Transverse colon (tissue), 4 donors: ENCODE measurements at regions of chr6 and their contacts with region 1.

Region 1: GRCh38 chr6:83884523-83884922 is 25.0 kb downstream of the CYB5R4 start:
- DNase-seq: no peak
- H3K4me3 ChIP-seq: no peak overlapping the region
- H3K27ac ChIP-seq: no peak overlapping the region
- H3K4me1 ChIP-seq: no peaks in the 10 kb centered on the region
- H3K27me3 ChIP-seq: no peaks in the 10 kb centered on the region
- CTCF ChIP-seq: peak; percentile 57 to 79 (median 66)
- EP300 ChIP-seq: no peak
- POLR2A ChIP-seq: no peak

Region 2: GRCh38 chr6:83962582-83962981 is 78.1 kb after region 1 on chr6:
- in situ Hi-C with region 1: no loop called
- intact Hi-C with region 1: no loop called
- DNase-seq: no peak
- H3K4me3 ChIP-seq: no peak overlapping the region
- H3K27ac ChIP-seq: no peak overlapping the region
- H3K4me1 ChIP-seq: no peaks in the 10 kb centered on the region
- H3K27me3 ChIP-seq: no peaks in the 10 kb centered on the region
- CTCF ChIP-seq: no peak
- EP300 ChIP-seq: no peak
- POLR2A ChIP-seq: no peak

Region 3: DNA sequence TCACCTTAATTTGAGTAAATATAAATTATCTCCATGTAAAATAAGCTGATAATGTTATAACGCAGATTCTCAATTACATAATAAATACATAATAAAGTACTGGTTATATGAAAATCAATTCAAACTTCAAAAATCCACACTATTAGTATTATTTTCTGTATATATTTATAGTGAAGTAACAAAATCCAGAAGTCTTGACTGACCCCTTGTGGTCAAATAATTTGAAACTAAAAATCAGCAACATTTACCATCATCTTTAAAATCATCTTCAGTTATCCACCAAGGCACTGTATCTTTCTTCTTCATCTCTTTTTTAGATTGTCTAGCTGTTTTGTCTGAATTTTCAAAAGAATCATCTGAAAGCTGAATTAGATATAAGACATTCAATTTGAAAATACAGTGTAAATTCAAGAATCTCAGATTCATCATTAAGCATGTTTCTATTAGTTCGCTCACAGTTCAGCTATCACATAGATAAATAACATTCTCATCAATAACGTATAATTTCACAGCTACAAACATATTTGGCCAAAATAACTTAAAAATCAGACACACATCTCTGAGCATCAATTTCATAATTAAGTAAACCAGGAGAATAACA is 336.4 kb after region 1 on chr6:
- in situ Hi-C with region 1: loop called in 3 of 4 experiments (anchors 10 to 25 kb)
- intact Hi-C with region 1: no loop called
- DNase-seq: no peak
- H3K4me3 ChIP-seq: no peak overlapping the region
- H3K27ac ChIP-seq: no peak overlapping the region
- H3K4me1 ChIP-seq: peaks cover 0 to 5% (median 0%) of the 10 kb centered on the region in 4 donors
- H3K27me3 ChIP-seq: no peaks in the 10 kb centered on the region
- CTCF ChIP-seq: peak; percentile 43 to 51 (median 46)
- EP300 ChIP-seq: no peak
- POLR2A ChIP-seq: no peak

Region 4: DNA sequence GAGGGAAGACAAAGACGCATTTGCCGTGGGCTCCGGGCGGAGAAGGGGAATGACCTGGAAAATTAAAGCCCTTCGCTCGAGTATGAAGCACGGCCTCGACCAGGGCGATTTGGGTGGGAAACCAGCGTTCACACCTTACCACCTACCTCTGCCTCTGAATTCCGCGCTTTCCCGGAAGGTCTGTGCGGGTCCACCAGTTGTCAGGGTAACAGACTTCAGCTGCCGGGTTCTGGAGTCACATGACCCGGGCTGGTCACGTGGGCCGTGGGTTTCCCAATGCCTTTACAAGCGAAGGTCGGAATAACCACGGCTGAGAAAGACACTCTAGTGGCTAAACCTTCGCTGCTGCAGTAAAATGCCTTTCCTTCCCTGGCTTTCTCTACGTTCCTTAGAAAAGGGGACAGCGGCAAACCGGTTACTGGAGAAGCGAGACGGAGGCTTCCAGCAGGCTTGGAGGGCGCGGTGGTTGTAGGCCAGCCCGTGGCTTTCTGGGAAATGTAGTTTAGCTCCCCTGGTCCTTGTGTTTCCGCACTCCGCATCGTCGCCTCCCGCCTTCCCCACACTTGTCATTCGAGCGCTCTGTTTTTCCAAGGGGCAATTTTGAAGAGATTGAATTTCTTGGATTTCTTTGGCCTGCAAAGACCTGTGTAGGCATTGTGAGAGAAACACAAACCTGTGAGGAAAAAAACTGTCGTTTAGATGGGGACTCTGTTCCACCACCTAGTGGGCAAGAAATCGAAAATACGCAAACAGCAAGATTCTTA is 343.1 kb after region 1 on chr6 and contains the start of gene CEP162:
- in situ Hi-C with region 1: loop called (anchors 10 to 25 kb)
- intact Hi-C with region 1: no loop called
- DNase-seq: peak; percentile 93
- H3K4me3 ChIP-seq: peak within 1 kb of the TSS; percentile 60 to 78 (median 70)
- H3K27ac ChIP-seq: peak within 1 kb of the TSS; percentile 78 to 92 (median 87)
- H3K4me1 ChIP-seq: peaks cover 0 to 16% (median 9%) of the 10 kb centered on the region in 4 donors
- H3K27me3 ChIP-seq: peaks cover 21% of the 10 kb centered on the region
- CTCF ChIP-seq: peak; percentile 62 to 89 (median 72)
- EP300 ChIP-seq: no peak
- POLR2A ChIP-seq: no peak
- total RNA-seq, gene CEP162: 8.2 to 45.0 (median 9.7) TPM